Vagina (tissue), 2 donors: ENCODE measurements at regions of chr6 and their contacts with region 1.

Region 1: DNA sequence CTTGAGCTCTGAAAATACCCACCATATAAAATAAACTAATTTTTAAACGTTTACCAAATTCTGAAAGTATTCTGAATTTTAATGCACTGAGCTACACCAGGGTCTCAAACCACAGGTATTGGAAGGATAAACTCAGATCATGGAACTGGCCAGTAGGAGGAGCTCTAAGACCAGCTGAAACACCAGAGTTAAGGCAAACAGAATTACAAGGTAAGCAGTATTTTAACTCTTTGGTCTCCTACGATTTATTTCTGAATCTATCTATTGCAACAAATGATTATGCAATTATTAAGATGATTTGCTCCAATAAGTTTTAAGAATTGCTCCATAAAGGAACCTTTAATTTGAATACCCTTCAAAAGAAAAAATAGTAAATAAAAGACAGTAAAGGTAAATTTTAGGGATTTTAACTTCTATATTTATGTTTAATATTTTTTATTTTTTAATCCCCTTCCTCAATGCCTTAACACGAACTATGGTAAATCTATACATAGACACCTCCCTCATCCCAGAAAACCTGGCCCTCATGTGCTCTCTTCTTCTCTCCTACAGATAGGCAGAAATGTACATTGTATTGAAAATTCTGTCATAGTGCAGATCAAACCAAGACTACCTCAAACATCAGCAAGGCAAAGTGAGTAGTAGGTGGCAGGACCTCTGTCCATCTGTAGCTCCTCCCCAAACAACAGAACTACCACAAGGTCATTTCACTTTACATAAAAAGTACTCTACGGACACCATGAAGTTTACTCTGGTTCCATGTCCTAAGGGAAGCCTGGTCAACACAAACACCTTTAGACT is 58.4 kb downstream of the SMLR1 start:
- DNase-seq: no peak
- H3K4me3 ChIP-seq: no peak overlapping the region
- H3K27ac ChIP-seq: no peak overlapping the region
- H3K4me1 ChIP-seq: no peaks in the 10 kb centered on the region
- H3K27me3 ChIP-seq: no peaks in the 10 kb centered on the region
- CTCF ChIP-seq: peak; percentile 79 to 95 (median 90)
- POLR2A ChIP-seq: no peak

Region 2: DNA sequence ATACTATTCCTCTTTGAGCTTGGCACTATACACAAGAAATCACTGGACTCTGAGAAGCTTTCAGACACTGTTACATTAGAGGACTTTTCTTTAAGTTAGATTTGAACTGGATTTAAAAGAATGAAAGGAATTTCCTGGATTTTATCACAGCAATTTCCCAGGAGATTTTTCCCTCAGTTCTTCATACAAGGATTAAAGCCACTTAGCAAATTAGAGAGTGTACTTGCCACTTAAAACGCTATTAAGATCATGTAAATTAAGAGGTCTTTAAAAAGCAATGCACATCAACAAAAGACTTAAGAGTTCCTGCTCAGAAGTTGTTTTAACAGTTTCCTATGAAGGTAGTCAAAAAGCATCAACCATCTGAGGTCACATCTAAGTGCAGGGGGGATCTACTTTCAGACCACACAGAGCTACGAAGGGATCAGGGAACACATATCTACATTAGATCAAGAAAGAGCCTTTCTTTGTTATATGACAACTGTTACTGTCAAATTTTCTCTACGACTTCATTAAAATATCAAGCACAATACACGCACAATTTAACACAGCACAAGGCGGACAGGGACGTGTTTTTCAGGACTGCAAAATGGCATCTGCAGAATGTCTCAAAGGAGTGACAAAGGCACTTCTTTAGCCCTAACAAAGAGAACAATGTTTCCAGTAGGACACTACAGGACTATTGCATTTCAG is 111.6 kb after region 1 on chr6:
- intact Hi-C with region 1: no loop called
- DNase-seq: no peak
- H3K4me3 ChIP-seq: no peak overlapping the region
- H3K27ac ChIP-seq: no peak overlapping the region
- H3K4me1 ChIP-seq: peaks cover 14% of the 10 kb centered on the region
- H3K27me3 ChIP-seq: no peaks in the 10 kb centered on the region
- CTCF ChIP-seq: no peak
- POLR2A ChIP-seq: no peak

Region 3: DNA sequence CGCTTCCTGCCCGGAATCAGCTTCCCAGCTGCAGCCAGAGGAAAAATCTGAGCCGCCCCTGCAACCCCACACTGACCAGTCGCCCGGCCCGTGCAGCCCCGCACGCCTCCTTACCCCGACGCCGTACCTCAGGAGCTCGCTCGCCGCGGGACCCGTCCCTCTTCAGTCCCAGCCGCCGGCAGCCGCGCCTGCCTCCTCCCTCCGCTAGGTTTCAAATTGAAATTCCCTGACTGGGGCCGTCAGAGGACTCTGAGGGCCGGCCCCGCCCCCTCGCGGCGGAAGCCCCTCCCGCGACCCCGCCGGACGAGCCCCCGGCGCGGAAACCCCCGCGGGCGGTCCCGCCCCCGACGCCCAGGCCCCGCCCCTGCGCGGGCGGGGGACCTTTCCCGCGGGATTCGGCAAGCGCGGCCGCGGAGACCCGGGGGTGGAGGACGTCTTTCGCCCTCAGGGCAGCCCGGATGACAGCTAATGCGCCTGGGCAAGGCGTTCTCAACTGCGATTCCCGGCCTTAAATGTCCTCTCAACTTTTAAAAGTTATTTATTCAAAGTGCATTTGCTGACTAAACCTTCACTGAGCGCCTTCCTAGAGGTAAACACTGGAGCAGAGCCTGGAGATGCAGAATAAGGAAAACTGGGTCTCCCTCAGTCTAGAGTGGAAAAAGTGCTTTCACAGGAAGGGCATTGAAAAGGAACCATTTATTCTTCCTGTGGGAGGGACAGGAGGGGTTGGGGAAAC is 177.6 kb after region 1 on chr6 and contains the start of gene EPB41L2:
- intact Hi-C with region 1: loop called (anchors 5 kb)
- DNase-seq: no peak
- H3K4me3 ChIP-seq: peak within 1 kb of the TSS; percentile 77 to 99
- H3K27ac ChIP-seq: peak within 1 kb of the TSS; percentile 91
- H3K4me1 ChIP-seq: peaks cover 14% of the 10 kb centered on the region
- H3K27me3 ChIP-seq: no peaks in the 10 kb centered on the region
- CTCF ChIP-seq: no peak
- POLR2A ChIP-seq: peak; percentile 78 to 87
- total RNA-seq, gene EPB41L2: 96.7 TPM

Region 4: DNA sequence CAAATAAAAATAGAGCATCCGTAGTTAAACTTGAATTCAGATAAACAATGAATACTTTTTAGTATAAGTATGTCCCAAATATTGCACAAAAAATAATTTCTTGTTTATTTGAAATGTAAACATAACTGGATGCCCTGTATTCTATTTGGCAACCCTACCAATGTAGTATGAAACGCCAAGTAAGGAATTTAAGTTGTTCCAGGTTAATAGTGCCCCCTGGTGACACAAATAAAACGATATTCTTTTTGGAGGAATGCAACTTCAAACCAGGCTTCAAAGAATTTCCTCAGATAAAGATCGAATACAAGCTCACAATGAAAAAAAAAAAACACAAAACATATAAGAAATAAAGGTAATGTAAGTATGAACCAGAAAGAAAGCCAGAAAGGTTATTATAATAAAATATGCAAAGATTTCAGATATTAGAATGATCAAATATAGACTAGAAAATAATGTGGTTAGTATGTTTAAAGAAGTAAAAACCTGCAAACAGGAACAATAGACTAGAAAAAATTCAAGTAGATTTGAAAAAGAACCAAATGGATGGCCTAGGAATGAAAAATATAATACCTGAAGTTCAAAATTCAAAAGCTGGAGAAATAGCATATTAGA is 231.3 kb after region 1 on chr6:
- intact Hi-C with region 1: loop called (anchors 5 kb)
- DNase-seq: no peak
- H3K4me3 ChIP-seq: no peak overlapping the region
- H3K27ac ChIP-seq: no peak overlapping the region
- H3K4me1 ChIP-seq: no peaks in the 10 kb centered on the region
- H3K27me3 ChIP-seq: no peaks in the 10 kb centered on the region
- CTCF ChIP-seq: peak; percentile 33 to 69 (median 46)
- POLR2A ChIP-seq: no peak